ENCODE measurements at regions of chr1 and their contacts with region 1.

Region 1: GRCh38 chr1:33367485-33368405 is 46.8 kb upstream of the A3GALT2 start:
- DNase-seq: peak; percentile 91
- H3K4me3 ChIP-seq: no peak overlapping the region
- H3K27ac ChIP-seq: no peak overlapping the region
- H3K4me1 ChIP-seq: no peaks in the 10 kb centered on the region
- H3K27me3 ChIP-seq: no peaks in the 10 kb centered on the region
- CTCF ChIP-seq: peak; percentile 94

Region 2: GRCh38 chr1:32925403-32926162 is 442.2 kb before region 1 on chr1:
- intact Hi-C with region 1: no loop called
- DNase-seq: no peak
- H3K4me3 ChIP-seq: no peak overlapping the region
- H3K27ac ChIP-seq: peak overlapping the region; percentile 20
- H3K4me1 ChIP-seq: no peaks in the 10 kb centered on the region
- H3K27me3 ChIP-seq: no peaks in the 10 kb centered on the region
- CTCF ChIP-seq: no peak

Region 3: GRCh38 chr1:33219881-33220661 is 147.7 kb before region 1 on chr1:
- intact Hi-C with region 1: loop called (anchors 5 kb)
- DNase-seq: no peak
- H3K4me3 ChIP-seq: no peak overlapping the region
- H3K27ac ChIP-seq: no peak overlapping the region
- H3K4me1 ChIP-seq: no peaks in the 10 kb centered on the region
- H3K27me3 ChIP-seq: no peaks in the 10 kb centered on the region
- CTCF ChIP-seq: no peak

Region 4: GRCh38 chr1:33342041-33342723 is 25.6 kb before region 1 on chr1:
- intact Hi-C with region 1: no loop called
- DNase-seq: peak; percentile 88
- H3K4me3 ChIP-seq: no peak overlapping the region
- H3K27ac ChIP-seq: peak overlapping the region; percentile 80
- H3K4me1 ChIP-seq: peaks cover 27% of the 10 kb centered on the region
- H3K27me3 ChIP-seq: no peaks in the 10 kb centered on the region
- CTCF ChIP-seq: no peak